KBM-7 (cell line): ENCODE measurements at regions of chrX and their contacts with region 1.

Region 1: GRCh38 chrX:130079824-130080406 is 30.4 kb downstream of the ELF4 start:
- DNase-seq: peak; percentile 81

Region 2: GRCh38 chrX:129833152-129833990 is 246.5 kb before region 1 on chrX:
- in situ Hi-C with region 1: no loop called
- DNase-seq: no peak

Region 3: GRCh38 chrX:130118441-130119311 is 38.8 kb after region 1 on chrX:
- in situ Hi-C with region 1: loop called (anchors 5 kb)
- DNase-seq: peak; percentile 43

Region 4: DNA sequence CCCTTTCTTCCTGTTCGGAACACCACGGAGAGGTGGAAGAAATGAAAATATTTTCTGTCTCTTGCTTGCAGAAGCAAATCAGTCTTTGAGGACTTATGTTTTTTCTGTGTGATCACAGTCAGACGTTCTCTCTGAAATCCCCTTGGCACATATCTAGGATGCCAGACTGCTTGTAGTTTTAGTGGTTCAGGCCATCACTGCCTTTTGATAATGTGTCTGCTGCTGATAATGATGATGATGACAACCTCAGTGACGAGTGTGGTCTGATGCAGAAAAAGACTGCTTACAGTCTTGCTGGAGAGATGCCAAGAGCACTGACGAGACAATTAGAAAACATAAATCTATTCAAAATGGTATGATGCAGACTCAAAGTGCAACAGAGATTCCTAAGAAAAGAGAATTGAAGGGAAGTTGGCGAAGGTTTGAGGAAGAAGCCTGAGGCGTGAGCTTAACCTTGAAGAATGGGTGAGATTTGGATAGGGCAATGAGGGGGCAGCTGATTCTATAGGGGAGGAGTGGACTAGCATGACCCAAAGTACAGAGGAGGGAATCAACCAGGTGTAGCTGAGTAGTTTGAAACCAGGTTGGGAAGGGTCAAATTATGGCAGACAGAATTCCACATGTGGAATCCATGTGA is 99.8 kb after region 1 on chrX:
- in situ Hi-C with region 1: loop called (anchors 10 kb)
- DNase-seq: peak; percentile 57

Region 5: DNA sequence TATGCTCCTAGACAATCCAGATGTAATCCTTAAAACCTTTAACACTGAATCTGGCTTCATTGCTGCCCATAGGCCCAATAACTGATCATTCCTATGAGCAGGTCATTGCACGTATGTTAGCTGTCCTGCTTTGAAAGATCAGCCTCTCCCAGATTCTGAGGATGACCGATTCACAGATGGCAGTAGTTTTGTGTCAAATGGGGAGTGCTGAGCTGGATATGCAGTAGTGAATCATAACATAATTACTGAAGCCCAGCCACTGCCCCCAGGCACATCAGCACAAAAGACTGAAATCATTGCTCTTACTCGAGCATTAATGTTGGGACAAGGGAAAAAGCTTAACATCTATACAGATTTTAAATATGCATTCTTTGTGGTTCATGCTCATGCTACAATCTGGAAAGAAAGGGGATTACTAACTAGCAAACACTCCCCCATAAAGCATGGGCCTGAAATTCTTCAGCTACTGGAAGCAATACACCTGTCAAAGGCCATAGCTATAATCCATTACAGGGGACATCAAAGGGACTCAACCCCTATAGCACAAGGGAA is 205.2 kb after region 1 on chrX:
- in situ Hi-C with region 1: no loop called
- DNase-seq: no peak